ENCODE measurements at regions of chr15 and their contacts with region 1.

Region 1: GRCh38 chr15:71730277-71731144 is 79.8 kb upstream of the NR2E3 start:
- DNase-seq: no peak
- ATAC-seq: peak; percentile 76

Region 2: DNA sequence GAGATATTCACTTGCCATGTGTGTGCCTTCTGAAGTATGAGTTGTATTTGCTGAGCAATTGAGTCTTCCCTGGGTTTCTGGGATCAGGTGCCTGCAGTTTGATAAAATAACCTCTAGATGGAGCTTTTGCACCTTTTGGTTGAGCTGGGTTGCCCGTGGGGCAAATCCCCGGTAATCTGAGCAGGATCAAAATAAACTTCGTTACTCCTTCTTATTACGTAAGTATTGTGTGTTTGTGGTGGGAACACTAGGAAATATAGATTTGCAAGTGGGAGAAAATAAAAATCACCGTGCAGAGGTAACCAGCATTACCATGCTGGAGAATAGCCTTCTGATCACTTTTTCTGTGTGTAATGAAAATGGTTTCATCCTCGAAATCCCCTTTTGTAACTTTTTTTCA is 197.5 kb before region 1 on chr15:
- intact Hi-C with region 1: loop called (anchors 10 kb)
- DNase-seq: no peak
- ATAC-seq: no peak

Region 3: GRCh38 chr15:71575474-71576045 is 155.0 kb before region 1 on chr15:
- intact Hi-C with region 1: loop called (anchors 1 kb)
- DNase-seq: no peak
- ATAC-seq: no peak

Measured in Right ventricle myocardium inferior (tissue), 1 donor.